ENCODE measurements at regions of chr7 and their contacts with region 1.

Region 1: GRCh38 chr7:110718503-110719205 is 372.3 kb upstream of the LRRN3 start:
- DNase-seq: no peak
- ATAC-seq: no peak
- H3K4me3 ChIP-seq: no peak overlapping the region
- H3K27ac ChIP-seq: no peak overlapping the region
- H3K4me1 ChIP-seq: no peaks in the 10 kb centered on the region
- H3K27me3 ChIP-seq: no peaks in the 10 kb centered on the region
- CTCF ChIP-seq: no peak
- EP300 ChIP-seq: no peak
- POLR2A ChIP-seq: no peak
- RAD21 ChIP-seq: no peak

Region 2: GRCh38 chr7:110432061-110432553 is 286.5 kb before region 1 on chr7:
- CTCF ChIA-PET with region 1: no interaction called
- POLR2A ChIA-PET with region 1: no interaction called
- RAD21 ChIA-PET with region 1: no interaction called
- SMC1A ChIA-PET with region 1: no interaction called
- in situ Hi-C with region 1: no loop called
- intact Hi-C with region 1: no loop called
- DNase-seq: no peak
- ATAC-seq: no peak
- H3K4me3 ChIP-seq: no peak overlapping the region
- H3K27ac ChIP-seq: no peak overlapping the region
- H3K4me1 ChIP-seq: no peaks in the 10 kb centered on the region
- H3K27me3 ChIP-seq: no peaks in the 10 kb centered on the region
- CTCF ChIP-seq: no peak
- EP300 ChIP-seq: no peak
- POLR2A ChIP-seq: no peak
- RAD21 ChIP-seq: no peak

Region 3: GRCh38 chr7:110704219-110704618 is 14.4 kb before region 1 on chr7:
- CTCF ChIA-PET with region 1: no interaction called
- POLR2A ChIA-PET with region 1: no interaction called
- RAD21 ChIA-PET with region 1: no interaction called
- SMC1A ChIA-PET with region 1: no interaction called
- in situ Hi-C with region 1: no loop called
- intact Hi-C with region 1: loop called (anchors 1 kb)
- DNase-seq: no peak
- ATAC-seq: no peak
- H3K4me3 ChIP-seq: no peak overlapping the region
- H3K27ac ChIP-seq: no peak overlapping the region
- H3K4me1 ChIP-seq: no peaks in the 10 kb centered on the region
- H3K27me3 ChIP-seq: no peaks in the 10 kb centered on the region
- CTCF ChIP-seq: no peak
- EP300 ChIP-seq: no peak
- POLR2A ChIP-seq: no peak
- RAD21 ChIP-seq: no peak

Measured in GM12878 (cell line).